ENCODE measurements at regions of chr1 and their contacts with region 1.

Region 1: GRCh38 chr1:109483672-109484518 is at the start of gene ATXN7L2:
- DNase-seq: peak; percentile 96
- ATAC-seq: peak; percentile 79
- H3K4me3 Mint-ChIP-seq: peak within 1 kb of the TSS; percentile 88
- H3K27ac Mint-ChIP-seq: peak within 1 kb of the TSS; percentile 96
- H3K4me1 Mint-ChIP-seq: peaks cover 33% of the 10 kb centered on the region
- H3K27me3 Mint-ChIP-seq: no peaks in the 10 kb centered on the region
- total RNA-seq, gene ATXN7L2: 11.7 to 13.0 TPM

Region 2: GRCh38 chr1:109090196-109091077 is 393.5 kb before region 1 on chr1 and contains the start of gene TMEM167B:
- CTCF ChIA-PET with region 1: no interaction called
- POLR2A ChIA-PET with region 1: no interaction called
- intact Hi-C with region 1: loop called in 1 of 2 experiments (anchors 5 kb)
- DNase-seq: peak; percentile 95
- ATAC-seq: peak; percentile 88
- H3K4me3 Mint-ChIP-seq: peak within 1 kb of the TSS; percentile 85
- H3K27ac Mint-ChIP-seq: peak within 1 kb of the TSS; percentile 84
- H3K4me1 Mint-ChIP-seq: peaks cover 30% of the 10 kb centered on the region
- H3K27me3 Mint-ChIP-seq: no peaks in the 10 kb centered on the region
- total RNA-seq, gene TMEM167B: 26.8 to 28.4 TPM

Region 3: DNA sequence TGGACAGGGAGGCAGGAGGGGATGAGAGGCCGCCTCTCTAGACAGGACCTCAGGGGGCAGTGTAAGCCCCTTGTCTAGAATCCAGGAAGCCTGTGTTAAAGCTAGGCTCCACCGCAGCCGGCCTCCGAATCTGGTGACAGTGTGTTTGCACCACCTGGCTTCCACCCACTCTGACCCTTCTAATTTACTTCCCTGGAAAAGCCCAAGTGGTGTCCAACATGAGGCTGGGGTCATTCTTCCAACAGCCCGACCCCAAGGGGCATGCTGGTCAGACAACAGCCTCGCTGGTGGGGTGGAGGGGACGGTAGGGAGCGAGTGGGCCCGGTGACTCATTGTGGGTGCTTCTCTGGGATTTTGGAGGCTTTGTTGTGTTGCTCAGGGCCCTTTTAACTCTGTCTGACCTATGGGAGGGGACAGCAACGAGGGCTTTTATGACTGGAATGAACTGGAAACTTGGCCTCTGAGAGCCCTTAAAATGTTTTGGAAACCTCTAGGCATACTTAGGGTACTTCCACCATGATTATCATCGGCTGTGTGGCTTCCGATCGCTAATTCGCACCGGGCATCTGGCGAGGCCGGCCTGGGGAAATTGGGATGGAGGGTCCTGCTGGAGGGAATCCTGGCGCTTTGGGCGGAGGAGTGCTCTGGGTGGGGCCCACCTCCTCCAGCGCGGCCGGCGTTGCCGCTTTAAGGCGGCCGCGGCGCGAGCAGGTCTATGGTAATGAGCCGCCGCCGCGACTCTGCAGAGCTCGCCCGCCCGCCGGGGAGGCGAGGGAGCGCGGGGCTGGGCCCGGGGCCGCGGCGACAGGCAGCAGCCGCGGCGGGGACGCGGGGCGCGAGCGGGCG is 234.9 kb before region 1 on chr1 and contains the start of gene CELSR2:
- CTCF ChIA-PET with region 1: interaction called, 4 read pairs
- POLR2A ChIA-PET with region 1: no interaction called
- intact Hi-C with region 1: loop called in 1 of 2 experiments (anchors 1 kb)
- DNase-seq: peak; percentile 80
- ATAC-seq: peak; percentile 89
- H3K4me3 Mint-ChIP-seq: peak within 1 kb of the TSS; percentile 47
- H3K27ac Mint-ChIP-seq: no peak within 1 kb of the TSS
- H3K4me1 Mint-ChIP-seq: peaks cover 4% of the 10 kb centered on the region
- H3K27me3 Mint-ChIP-seq: peaks cover 4% of the 10 kb centered on the region
- total RNA-seq, gene CELSR2: 1.9 to 2.0 TPM

Region 4: GRCh38 chr1:109493805-109494539 is 10.1 kb after region 1 on chr1 and contains the start of gene CYB561D1:
- CTCF ChIA-PET with region 1: interaction called, 26 read pairs
- POLR2A ChIA-PET with region 1: interaction called, 4 read pairs
- intact Hi-C with region 1: loop called in 1 of 2 experiments (anchors 1 kb)
- DNase-seq: peak; percentile 95
- ATAC-seq: peak; percentile 89
- H3K4me3 Mint-ChIP-seq: peak within 1 kb of the TSS; percentile 98
- H3K27ac Mint-ChIP-seq: peak within 1 kb of the TSS; percentile 90
- H3K4me1 Mint-ChIP-seq: peaks cover 45% of the 10 kb centered on the region
- H3K27me3 Mint-ChIP-seq: no peaks in the 10 kb centered on the region
- total RNA-seq, gene CYB561D1: 7.1 to 8.7 TPM

Region 5: GRCh38 chr1:109509176-109510134 is 25.6 kb after region 1 on chr1 and contains the start of gene AMIGO1:
- CTCF ChIA-PET with region 1: interaction called, 16 read pairs
- POLR2A ChIA-PET with region 1: no interaction called
- intact Hi-C with region 1: loop called in 1 of 2 experiments (anchors 1 kb)
- DNase-seq: peak; percentile 73
- ATAC-seq: peak; percentile 56
- H3K4me3 Mint-ChIP-seq: peak within 1 kb of the TSS; percentile 77
- H3K27ac Mint-ChIP-seq: peak within 1 kb of the TSS; percentile 76
- H3K4me1 Mint-ChIP-seq: peaks cover 59% of the 10 kb centered on the region
- H3K27me3 Mint-ChIP-seq: no peaks in the 10 kb centered on the region
- total RNA-seq, gene AMIGO1: 1.8 to 2.0 TPM

Region 6: GRCh38 chr1:109788695-109789521 is 305.0 kb after region 1 on chr1:
- CTCF ChIA-PET with region 1: no interaction called
- POLR2A ChIA-PET with region 1: no interaction called
- intact Hi-C with region 1: no loop called
- DNase-seq: peak; percentile 7
- ATAC-seq: no peak
- H3K4me3 Mint-ChIP-seq: no peak overlapping the region
- H3K27ac Mint-ChIP-seq: peak overlapping the region; percentile 51
- H3K4me1 Mint-ChIP-seq: peaks cover 44% of the 10 kb centered on the region
- H3K27me3 Mint-ChIP-seq: no peaks in the 10 kb centered on the region